ENCODE measurements at regions of chr11 and their contacts with region 1.

Region 1: GRCh38 chr11:34492806-34493414 is 20.7 kb downstream of the ELF5 start:
- DNase-seq: peak; percentile 82

Region 2: GRCh38 chr11:33829433-33830141 is 663.3 kb before region 1 on chr11:
- in situ Hi-C with region 1: loop called (anchors 25 kb)
- DNase-seq: peak; percentile 81

Region 3: DNA sequence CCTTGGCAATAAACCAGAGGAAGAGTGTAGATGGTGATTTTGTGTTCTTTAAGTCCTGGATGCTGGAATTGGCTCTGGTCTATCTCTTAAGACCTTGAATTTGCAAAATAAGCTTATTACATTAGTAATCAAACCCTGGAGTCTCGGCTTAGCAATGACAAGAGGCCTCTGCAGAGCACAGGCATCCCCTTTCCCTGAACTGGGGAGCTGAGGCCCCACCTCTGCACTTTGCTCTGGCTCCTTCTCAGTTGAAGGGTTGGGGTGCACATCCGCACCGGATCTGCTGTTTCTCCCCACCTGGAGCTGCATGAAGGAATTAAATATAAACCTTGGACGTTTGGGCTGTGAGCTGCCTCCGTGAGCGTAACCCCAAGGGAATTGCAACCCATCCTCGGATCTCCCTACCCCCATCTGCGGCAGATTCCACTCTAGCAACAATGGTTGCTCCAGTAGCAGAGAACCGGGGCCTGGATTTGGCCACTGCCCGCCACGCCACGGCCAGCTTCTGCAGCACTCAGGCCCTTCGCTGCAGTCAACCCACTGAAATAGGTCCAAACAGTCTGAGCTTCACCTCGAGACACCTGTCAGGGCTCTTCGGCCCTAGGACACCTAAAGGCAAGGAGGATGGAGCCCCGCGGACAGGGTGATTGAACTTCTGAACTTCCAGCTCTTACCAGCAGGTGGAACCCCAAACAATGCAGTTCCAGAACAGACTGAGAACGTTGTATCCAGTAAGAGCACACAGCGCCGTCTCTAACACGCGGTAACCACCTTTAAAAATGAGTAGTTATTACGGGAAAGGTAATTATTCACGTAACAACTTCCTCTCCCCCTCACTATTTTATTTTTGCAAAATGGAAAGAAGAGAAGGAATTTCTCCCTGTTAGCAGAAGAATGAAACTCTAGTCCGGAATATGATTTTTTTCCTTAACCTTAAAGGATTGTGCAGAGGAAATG is 496.1 kb before region 1 on chr11:
- in situ Hi-C with region 1: loop called (anchors 25 kb)
- DNase-seq: peak; percentile 84

Region 4: DNA sequence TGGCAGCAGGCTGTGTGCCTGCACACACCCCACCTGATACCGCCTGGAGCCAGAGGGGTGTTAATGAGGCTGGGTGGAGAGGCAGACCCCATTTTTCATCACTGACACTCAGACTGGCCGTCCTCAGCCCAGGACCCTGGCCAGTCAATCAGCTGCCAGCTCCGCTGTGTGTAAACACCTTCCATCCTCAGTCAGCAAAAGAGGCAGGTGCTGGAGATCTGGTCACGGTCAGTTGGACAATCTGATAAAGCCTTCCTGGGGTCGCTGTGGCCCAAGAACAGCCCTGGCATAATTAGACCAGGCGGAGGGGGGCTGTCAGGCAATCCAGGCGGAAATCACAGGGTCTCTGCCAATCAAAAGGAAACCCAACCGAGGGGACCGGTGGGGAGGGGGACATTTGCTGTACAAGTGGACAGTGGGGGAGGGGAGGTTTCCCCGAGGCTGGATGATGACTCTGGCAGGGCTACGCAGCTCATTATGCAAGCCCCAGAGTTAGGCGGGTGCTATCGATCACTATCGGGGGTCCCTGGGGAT is 208.0 kb before region 1 on chr11:
- in situ Hi-C with region 1: no loop called
- DNase-seq: no peak

Region 5: GRCh38 chr11:34313099-34313517 is 179.8 kb before region 1 on chr11:
- in situ Hi-C with region 1: no loop called
- DNase-seq: no peak